GM18951 (cell line): ENCODE measurements at regions of chr12 and their contacts with region 1.

Region 1: DNA sequence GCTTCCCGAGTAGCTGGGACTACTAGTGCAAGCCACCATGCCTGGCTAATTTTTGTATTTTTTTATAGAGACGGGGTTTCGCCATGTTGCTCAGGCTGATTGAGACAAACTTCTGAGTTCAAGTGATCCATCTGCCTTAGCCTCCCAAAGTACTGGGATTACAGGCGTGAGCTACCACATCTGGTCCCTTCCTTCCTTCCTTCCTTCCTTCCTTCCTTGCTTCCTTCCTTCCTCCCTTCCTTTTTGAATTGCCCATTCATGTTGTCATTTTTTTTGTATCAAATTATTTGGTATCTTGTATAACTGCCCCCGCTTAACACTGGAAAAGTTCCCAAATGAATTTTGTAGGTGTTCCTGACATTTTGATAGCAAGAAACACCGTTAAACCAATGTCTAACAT is 11.7 kb downstream of the RAD9B start:
- POLR2A ChIP-seq: no peak

Region 2: GRCh38 chr12:110590806-110591326 is 77.0 kb after region 1 on chr12:
- in situ Hi-C with region 1: loop called (anchors 5 kb)
- POLR2A ChIP-seq: no peak

Region 3: DNA sequence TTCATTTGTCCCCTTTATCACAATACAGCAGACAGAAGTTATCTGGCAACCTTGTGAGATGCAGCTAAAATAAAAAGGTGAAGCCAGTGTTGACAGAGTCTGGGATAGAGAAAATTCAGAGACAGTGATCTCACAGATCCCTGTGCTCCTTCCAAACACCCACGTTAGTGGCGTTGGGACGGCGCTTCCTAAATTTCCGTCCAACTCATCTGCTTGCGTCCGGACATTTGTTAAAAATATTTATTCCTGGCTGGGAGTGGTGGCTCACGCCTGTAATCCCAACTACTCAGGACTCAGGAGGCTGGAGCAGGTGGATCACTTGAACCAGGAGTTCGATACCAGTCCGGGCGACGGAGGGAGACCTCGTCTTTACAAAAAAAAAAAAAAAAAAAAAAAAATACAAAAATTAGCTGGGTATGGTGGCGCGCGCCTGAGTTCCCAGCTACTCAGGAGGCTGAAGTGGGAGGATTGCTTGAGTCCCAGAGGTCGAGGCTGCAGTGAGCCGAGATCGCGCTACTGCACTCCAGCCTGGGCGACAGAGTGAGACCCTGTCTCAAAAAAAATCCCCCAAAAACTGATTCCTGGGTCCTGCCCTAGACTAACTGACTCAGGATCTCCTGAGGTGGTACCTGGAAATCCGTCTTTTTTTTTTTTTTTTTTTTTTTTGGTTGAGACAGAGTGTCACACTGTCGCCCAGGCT is 99.4 kb after region 1 on chr12:
- in situ Hi-C with region 1: no loop called
- POLR2A ChIP-seq: no peak